ENCODE measurements at regions of chr2 and their contacts with region 1.

Region 1: GRCh38 chr2:212777020-212777491 is 238.5 kb upstream of the ERBB4 start:
- DNase-seq: peak in 1 of 2 donors; percentile 57
- ATAC-seq: peak; percentile 66 to 91 (median 79)
- H3K4me3 ChIP-seq: no peak overlapping the region
- H3K4me3 Mint-ChIP-seq: peak overlapping the region; percentile 77
- H3K27ac ChIP-seq: no peak overlapping the region
- H3K27ac Mint-ChIP-seq: peak overlapping the region; percentile 46 to 66
- H3K4me1 ChIP-seq: no peaks in the 10 kb centered on the region
- H3K4me1 Mint-ChIP-seq: peaks cover 15 to 23% of the 10 kb centered on the region in 2 donors
- H3K27me3 ChIP-seq: no peaks in the 10 kb centered on the region
- H3K27me3 Mint-ChIP-seq: no peaks in the 10 kb centered on the region
- CTCF ChIP-seq: peak; percentile 86

Region 2: DNA sequence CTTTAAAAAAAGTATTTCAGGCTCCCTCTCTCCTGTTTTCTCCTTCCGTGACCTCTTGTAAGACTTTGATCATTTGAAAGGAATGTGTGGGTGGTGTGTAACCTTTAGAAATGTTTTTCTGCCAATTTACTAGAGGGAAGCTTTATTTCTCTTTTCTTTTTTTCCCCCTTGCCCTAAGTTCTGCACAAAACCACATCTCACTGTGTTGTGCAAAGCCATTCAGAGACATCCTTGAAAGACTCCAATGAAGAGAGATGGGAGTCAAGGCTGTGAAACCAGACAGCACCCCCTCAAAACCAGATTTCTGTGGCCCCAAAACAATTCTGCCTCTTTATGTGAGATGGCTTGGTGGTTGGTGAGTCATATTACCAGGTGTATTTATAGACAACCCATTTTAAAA is 53.8 kb before region 1 on chr2:
- intact Hi-C with region 1: no loop called
- DNase-seq: no peak
- ATAC-seq: no peak
- H3K4me3 ChIP-seq: no peak overlapping the region
- H3K4me3 Mint-ChIP-seq: no peak overlapping the region
- H3K27ac ChIP-seq: no peak overlapping the region
- H3K27ac Mint-ChIP-seq: no peak overlapping the region
- H3K4me1 ChIP-seq: peaks cover 6% of the 10 kb centered on the region
- H3K4me1 Mint-ChIP-seq: peaks cover 24 to 39% of the 10 kb centered on the region in 2 donors
- H3K27me3 ChIP-seq: no peaks in the 10 kb centered on the region
- H3K27me3 Mint-ChIP-seq: no peaks in the 10 kb centered on the region
- CTCF ChIP-seq: no peak

Region 3: DNA sequence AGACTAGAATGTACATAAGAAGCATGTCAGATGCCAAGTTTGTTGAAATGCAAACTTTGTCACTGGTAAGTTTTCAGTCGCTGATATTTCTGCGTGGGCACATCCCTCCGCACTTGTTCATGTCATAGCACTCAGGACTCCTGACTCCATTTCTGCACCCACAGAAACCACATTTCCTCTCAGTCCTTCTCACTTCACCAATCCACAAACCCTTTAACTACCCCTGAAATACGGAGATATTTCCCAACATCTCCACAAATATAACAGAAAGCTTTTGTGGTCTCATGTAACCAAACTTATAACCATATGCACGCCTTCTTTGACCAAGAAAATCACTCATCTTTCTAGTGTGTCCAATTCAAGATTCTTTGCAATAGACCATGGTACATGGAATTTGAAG is 38.4 kb after region 1 on chr2:
- intact Hi-C with region 1: loop called (anchors 5 kb)
- DNase-seq: peak in 1 of 2 donors; percentile 38
- ATAC-seq: peak; percentile 43 to 75 (median 61)
- H3K4me3 ChIP-seq: no peak overlapping the region
- H3K4me3 Mint-ChIP-seq: peak overlapping the region; percentile 75
- H3K27ac ChIP-seq: peak overlapping the region; percentile 77
- H3K27ac Mint-ChIP-seq: peak overlapping the region; percentile 91
- H3K4me1 ChIP-seq: peaks cover 30% of the 10 kb centered on the region
- H3K4me1 Mint-ChIP-seq: peaks cover 78 to 79% of the 10 kb centered on the region in 2 donors
- H3K27me3 ChIP-seq: no peaks in the 10 kb centered on the region
- H3K27me3 Mint-ChIP-seq: no peaks in the 10 kb centered on the region
- CTCF ChIP-seq: no peak

Region 4: GRCh38 chr2:212892193-212892592 is 115.1 kb after region 1 on chr2:
- intact Hi-C with region 1: loop called (anchors 1 kb)
- DNase-seq: peak in 1 of 2 donors; percentile 23
- ATAC-seq: peak; percentile 35 to 72 (median 70)
- H3K4me3 ChIP-seq: no peak overlapping the region
- H3K4me3 Mint-ChIP-seq: peak overlapping the region; percentile 26
- H3K27ac ChIP-seq: no peak overlapping the region
- H3K27ac Mint-ChIP-seq: peak overlapping the region in 1 of 2 donors; percentile 27
- H3K4me1 ChIP-seq: no peaks in the 10 kb centered on the region
- H3K4me1 Mint-ChIP-seq: peaks cover 11 to 17% of the 10 kb centered on the region in 2 donors
- H3K27me3 ChIP-seq: no peaks in the 10 kb centered on the region
- H3K27me3 Mint-ChIP-seq: no peaks in the 10 kb centered on the region
- CTCF ChIP-seq: peak; percentile 44

Region 5: DNA sequence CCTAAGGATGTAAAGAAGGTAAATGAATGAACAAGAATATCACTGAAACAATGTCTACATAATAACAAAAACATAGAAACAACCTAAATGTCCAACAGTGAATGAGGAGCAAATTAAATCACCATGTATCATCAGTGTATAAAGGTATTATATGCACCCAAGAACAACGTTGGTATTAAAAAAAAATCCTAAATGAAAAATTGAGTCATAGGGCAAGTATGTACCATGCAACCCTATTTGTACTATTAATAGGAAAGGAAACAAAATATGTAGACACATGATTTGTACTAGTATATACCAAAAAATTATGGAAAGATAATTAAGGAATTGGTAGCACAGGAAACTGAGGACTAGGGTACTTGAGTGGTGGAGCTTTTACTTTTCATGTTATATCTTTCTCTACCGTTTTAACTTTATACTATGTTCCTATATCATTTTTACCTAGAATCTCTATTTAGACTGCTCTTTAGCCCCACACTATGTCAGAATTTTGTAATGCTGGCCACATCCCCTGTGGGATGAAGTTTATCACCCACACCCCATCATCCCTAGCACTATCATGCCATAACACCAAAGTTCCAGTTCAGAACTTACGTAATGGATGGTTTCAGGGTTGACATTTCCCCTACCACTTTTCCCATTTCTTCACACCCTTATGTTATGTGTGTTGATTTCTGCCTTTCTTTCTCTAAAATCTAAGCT is 348.7 kb after region 1 on chr2:
- intact Hi-C with region 1: loop called (anchors 2 kb)
- DNase-seq: peak in 1 of 2 donors; percentile 50
- ATAC-seq: peak; percentile 85 to 94 (median 91)
- H3K4me3 ChIP-seq: no peak overlapping the region
- H3K4me3 Mint-ChIP-seq: peak overlapping the region; percentile 53
- H3K27ac ChIP-seq: no peak overlapping the region
- H3K27ac Mint-ChIP-seq: peak overlapping the region; percentile 74 to 90
- H3K4me1 ChIP-seq: peaks cover 10% of the 10 kb centered on the region
- H3K4me1 Mint-ChIP-seq: peaks cover 78 to 81% of the 10 kb centered on the region in 2 donors
- H3K27me3 ChIP-seq: no peaks in the 10 kb centered on the region
- H3K27me3 Mint-ChIP-seq: no peaks in the 10 kb centered on the region
- CTCF ChIP-seq: peak; percentile 27